HEK293 (cell line): ENCODE measurements at regions of chrX and their contacts with region 1.

Region 1: DNA sequence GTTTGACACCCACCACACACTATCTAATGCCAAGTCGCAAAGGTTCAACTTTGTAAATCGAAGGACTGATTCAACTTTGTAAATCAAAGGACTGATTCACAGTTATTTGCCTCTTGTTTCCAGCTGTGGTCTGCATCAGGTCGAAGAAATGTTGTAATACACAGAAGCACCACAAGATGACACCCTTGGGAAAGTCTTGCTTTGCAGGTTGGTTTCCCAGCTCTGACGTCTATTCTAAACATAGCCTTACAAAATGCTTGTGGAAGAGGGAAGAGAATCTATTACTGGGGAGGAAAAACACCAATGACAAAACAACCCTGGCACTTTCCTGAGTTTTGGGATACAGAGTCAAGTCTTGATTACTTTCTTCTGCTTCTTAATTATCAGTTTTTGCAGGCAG is 35.3 kb downstream of the SUPT20HL1 start:
- H3K4me3 ChIP-seq: no peak overlapping the region
- H3K27ac ChIP-seq: no peak overlapping the region
- H3K4me1 ChIP-seq: peaks cover 14% of the 10 kb centered on the region
- CTCF ChIP-seq: peak; percentile 71

Region 2: DNA sequence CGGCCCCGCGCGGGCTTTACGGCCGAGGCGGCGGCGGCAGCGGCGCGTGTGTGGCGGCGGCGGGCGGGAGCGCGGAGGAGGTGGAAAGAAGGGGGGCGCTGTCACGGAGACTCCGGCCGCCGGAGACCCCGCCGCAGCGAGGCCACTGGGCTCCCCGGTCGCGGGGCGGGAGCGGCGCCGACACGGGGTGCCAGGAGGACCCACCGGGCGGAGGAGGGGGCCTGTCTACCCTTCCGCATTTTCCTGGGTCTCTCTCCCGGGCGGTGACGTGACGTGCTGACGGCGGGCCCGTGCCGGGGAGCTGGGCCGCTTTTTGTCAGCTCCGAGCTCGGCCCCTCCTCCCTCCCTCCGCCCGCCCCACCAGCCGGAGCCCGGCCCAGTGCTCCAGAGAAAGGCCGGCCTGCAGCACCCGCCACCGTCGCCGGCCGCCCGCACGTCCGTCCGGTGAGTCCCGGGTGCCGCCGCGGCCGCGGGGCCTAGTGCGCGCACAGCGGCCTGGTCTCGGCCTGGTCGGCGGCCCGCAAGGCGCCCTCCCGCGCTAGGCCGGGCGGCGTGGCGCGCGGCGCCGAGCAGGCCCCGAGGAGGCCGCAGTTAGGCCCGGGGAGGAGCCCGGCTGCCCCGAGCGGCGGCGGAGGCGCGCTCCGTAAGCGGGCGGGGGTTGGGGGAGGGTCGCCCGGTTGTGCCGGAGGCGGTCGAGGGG is 246.3 kb before region 1 on chrX and contains the start of gene ZFX:
- CTCF ChIA-PET with region 1: no interaction called
- POLR2A ChIA-PET with region 1: no interaction called
- H3K4me3 ChIP-seq: peak within 1 kb of the TSS; percentile 99
- H3K27ac ChIP-seq: peak within 1 kb of the TSS; percentile 100
- H3K4me1 ChIP-seq: peaks cover 55% of the 10 kb centered on the region
- CTCF ChIP-seq: no peak; the same call in 1 of the 2 replicates

Region 3: GRCh38 chrX:24380262-24381187 is 15.2 kb before region 1 on chrX:
- CTCF ChIA-PET with region 1: interaction called, 10 read pairs
- POLR2A ChIA-PET with region 1: no interaction called
- H3K4me3 ChIP-seq: no peak overlapping the region
- H3K27ac ChIP-seq: peak overlapping the region; percentile 58
- H3K4me1 ChIP-seq: peaks cover 6% of the 10 kb centered on the region
- CTCF ChIP-seq: no peak

Region 4: GRCh38 chrX:24498975-24499374 is 103.2 kb after region 1 on chrX:
- CTCF ChIA-PET with region 1: interaction called, 196 read pairs
- POLR2A ChIA-PET with region 1: no interaction called
- H3K4me3 ChIP-seq: no peak overlapping the region
- H3K27ac ChIP-seq: no peak overlapping the region
- H3K4me1 ChIP-seq: peaks cover 7% of the 10 kb centered on the region
- CTCF ChIP-seq: no peak

Region 5: DNA sequence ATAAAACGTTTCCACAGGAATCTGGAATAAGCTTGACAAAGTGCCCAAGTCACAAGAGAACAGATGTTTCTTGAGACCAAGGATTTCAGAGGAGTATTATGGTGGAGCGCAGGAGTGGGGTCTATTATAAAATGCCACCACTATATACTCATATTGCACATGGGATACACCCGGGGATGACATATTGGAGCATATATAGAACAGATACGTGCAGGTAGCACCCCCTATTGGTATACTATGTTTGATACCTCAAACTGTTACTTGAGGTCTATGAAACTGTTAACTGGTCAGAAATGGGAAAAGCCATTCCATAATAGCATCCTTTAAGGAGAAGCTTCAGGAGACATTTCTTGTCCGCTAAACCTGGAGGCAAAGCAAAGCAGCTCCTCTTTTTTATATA is 165.3 kb after region 1 on chrX:
- CTCF ChIA-PET with region 1: interaction called, 18 read pairs
- POLR2A ChIA-PET with region 1: no interaction called
- H3K4me3 ChIP-seq: no peak overlapping the region
- H3K27ac ChIP-seq: no peak overlapping the region
- H3K4me1 ChIP-seq: no peaks in the 10 kb centered on the region
- CTCF ChIP-seq: no peak